PC-9 (cell line): ENCODE measurements at regions of chr1 and their contacts with region 1.

Region 1: DNA sequence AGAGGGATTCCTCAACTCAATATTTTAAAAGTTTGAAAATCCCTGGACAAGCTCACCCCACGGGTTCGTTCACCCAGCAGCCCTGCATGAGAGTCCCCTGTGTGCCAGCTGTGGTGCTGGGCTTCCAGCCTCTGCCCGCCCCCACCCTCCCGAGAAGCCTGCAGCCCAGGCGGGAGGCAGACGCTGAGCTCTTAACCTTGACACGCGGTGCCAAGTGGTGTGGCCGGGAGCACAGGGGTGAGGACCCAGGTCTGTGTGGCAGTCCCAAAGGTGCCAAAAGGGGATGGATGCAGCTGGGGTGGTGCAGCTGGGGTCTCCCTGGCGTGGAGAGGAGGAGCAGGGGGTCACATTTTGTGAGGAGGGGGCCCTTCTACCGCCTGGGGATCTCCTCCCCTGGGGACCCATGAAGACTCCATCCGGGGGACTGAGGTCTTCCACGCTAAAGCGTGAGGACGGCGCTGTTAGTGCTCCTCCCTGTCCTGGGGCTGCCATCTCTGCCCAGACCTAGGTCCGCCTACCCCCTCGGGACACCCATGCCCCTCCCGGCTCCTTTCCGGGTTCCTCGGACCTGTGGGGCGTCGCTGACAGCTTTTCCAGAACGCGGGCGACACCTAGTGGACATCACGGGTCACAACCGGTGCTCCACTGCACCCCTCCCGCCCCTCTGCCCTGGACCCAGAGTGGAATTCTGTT is 12.9 kb downstream of the PLA2G2F start:
- DNase-seq: peak; percentile 63 to 83
- H3K4me3 ChIP-seq: peak overlapping the region; percentile 21; the same call in 1 of the 2 replicates
- H3K27ac ChIP-seq: peak overlapping the region; percentile 91
- H3K4me1 ChIP-seq: peaks cover 20% of the 10 kb centered on the region
- H3K27me3 ChIP-seq: no peaks in the 10 kb centered on the region
- CTCF ChIP-seq: peak; percentile 87

Region 2: DNA sequence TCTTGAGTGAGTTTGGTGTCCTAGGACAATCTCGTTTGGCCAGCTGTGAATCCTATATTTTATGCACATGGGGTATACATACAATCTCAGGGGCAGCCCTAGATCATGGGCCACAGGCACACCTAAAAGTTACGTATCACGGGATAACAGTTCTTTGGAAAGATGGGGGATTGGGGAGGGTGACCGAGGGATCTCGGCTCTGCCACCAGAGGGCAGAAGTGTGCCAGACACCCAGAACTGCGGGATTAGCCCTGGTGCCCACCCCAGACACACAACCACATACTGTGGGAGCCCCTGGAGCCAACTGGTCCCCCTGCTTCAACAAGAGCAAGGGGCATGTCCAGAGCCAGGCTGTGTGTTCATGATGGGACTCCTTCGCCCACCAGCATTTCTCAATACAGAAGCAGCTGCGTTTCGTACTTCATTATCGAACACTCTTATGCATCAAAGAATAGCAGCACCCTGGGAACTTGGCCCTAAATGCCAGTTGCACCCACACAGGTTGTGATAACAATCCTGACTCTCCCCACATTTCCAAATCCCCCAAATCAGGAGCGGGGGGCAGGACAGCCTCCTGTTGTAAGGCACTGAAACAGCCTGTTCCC is 389.8 kb before region 1 on chr1:
- CTCF ChIA-PET with region 1: no interaction called
- POLR2A ChIA-PET with region 1: no interaction called
- intact Hi-C with region 1: loop called (anchors 10 kb)
- DNase-seq: peak in 1 of 2 experiments; percentile 28
- H3K4me3 ChIP-seq: no peak overlapping the region
- H3K27ac ChIP-seq: no peak overlapping the region
- H3K4me1 ChIP-seq: peaks cover 18% of the 10 kb centered on the region
- H3K27me3 ChIP-seq: no peaks in the 10 kb centered on the region
- CTCF ChIP-seq: peak; percentile 70

Region 3: GRCh38 chr1:19974822-19975416 is 177.1 kb before region 1 on chr1:
- CTCF ChIA-PET with region 1: interaction called, 7 read pairs
- POLR2A ChIA-PET with region 1: no interaction called
- intact Hi-C with region 1: loop called (anchors 1 kb)
- DNase-seq: peak; percentile 58 to 62
- H3K4me3 ChIP-seq: no peak overlapping the region
- H3K27ac ChIP-seq: no peak overlapping the region
- H3K4me1 ChIP-seq: no peaks in the 10 kb centered on the region
- H3K27me3 ChIP-seq: no peaks in the 10 kb centered on the region
- CTCF ChIP-seq: peak; percentile 66

Region 4: DNA sequence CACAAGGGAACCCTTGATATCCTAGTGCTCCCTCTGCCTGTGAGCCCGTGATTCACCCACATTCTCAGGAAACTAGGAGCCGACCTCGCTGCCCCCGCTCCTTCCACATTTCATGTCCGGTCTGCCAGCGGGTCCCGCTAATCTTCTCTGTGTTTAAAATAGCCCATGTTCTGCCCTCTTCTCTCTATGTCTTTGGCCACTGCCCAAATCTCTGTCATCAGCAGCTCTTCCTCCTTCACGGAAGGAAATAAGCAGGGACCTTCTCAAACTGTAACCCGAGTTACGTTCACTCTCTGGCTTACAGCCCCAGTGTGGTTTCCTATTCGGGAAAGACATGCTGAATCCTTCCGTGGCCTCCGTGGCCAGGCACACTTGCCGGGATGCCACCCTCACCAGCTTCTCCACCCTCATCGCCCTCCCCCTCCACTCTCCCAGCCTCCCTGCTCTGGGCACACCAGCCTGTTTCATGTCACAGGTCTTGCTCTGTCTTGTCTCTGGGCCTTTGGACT is 12.7 kb after region 1 on chr1:
- CTCF ChIA-PET with region 1: interaction called, 19 read pairs
- POLR2A ChIA-PET with region 1: no interaction called
- intact Hi-C with region 1: no loop called
- DNase-seq: no peak
- H3K4me3 ChIP-seq: no peak overlapping the region
- H3K27ac ChIP-seq: no peak overlapping the region
- H3K4me1 ChIP-seq: no peaks in the 10 kb centered on the region
- H3K27me3 ChIP-seq: no peaks in the 10 kb centered on the region
- CTCF ChIP-seq: no peak

Region 5: DNA sequence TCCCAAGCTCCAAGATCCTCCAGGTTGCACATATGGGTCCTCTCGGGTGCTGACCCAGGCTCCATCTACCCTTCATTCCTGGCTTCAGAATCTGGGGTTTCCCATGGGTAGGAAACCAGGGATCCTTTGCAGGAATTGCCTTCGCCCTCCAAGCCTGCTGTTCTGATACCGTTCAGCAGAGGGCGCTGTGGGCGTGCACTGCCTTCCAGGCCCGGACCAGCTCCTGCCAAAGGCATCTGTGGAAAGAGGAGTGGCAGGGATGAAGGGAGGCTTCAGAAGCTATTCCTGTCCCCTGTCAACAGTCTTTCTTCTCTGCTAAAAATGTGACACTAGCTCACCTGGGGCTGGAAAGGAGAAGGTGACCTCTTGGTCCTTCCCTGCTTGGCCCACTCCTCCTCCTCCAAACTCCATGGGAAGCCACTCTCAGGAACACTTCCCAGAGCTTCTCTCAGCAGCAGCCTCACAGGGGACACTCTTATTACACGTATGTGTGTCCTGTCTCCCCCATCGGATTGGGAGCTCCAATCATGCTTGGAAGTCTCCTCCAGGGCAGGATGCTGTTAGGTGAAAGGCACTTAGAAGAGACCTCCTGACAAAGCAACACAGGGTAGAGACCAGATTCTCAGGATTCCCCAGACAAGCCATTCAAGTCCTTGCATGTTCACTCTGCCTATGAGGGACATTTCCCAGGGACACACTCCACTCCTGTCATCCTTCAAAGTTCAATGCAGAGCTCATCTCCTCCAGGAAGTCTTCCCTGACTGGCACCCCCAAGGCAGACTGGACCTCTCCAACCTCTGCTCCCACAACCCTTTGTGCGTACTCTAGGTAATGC is 210.0 kb after region 1 on chr1:
- CTCF ChIA-PET with region 1: no interaction called
- POLR2A ChIA-PET with region 1: no interaction called
- intact Hi-C with region 1: loop called (anchors 5 kb)
- DNase-seq: peak in 1 of 2 experiments; percentile 80
- H3K4me3 ChIP-seq: no peak overlapping the region
- H3K27ac ChIP-seq: no peak overlapping the region
- H3K4me1 ChIP-seq: peaks cover 41% of the 10 kb centered on the region
- H3K27me3 ChIP-seq: no peaks in the 10 kb centered on the region
- CTCF ChIP-seq: peak; percentile 90

Region 6: GRCh38 chr1:20661207-20662109 is 509.4 kb after region 1 on chr1 and contains the start of gene DDOST:
- CTCF ChIA-PET with region 1: interaction called, 10 read pairs
- POLR2A ChIA-PET with region 1: no interaction called
- intact Hi-C with region 1: no loop called
- DNase-seq: peak; percentile 91 to 94
- H3K4me3 ChIP-seq: peak within 1 kb of the TSS; percentile 92
- H3K27ac ChIP-seq: peak within 1 kb of the TSS; percentile 41
- H3K4me1 ChIP-seq: peaks cover 11% of the 10 kb centered on the region
- H3K27me3 ChIP-seq: no peaks in the 10 kb centered on the region
- CTCF ChIP-seq: no peak
- total RNA-seq, gene DDOST: 210 and 251 TPM in 2 replicates